Breast epithelium (tissue), 4 donors: ENCODE measurements at regions of chr12 and their contacts with region 1.

Region 1: GRCh38 chr12:83349907-83350611 is 663.4 kb downstream of the TMTC2 start:
- DNase-seq: no peak
- H3K4me3 ChIP-seq: no peak overlapping the region
- H3K27ac ChIP-seq: no peak overlapping the region
- H3K4me1 ChIP-seq: no peaks in the 10 kb centered on the region
- H3K27me3 ChIP-seq: no peaks in the 10 kb centered on the region
- CTCF ChIP-seq: no peak
- POLR2A ChIP-seq: no peak

Region 2: GRCh38 chr12:83361475-83361874 is 11.4 kb after region 1 on chr12:
- intact Hi-C with region 1: loop called (anchors 1 kb)
- DNase-seq: no peak
- H3K4me3 ChIP-seq: no peak overlapping the region
- H3K27ac ChIP-seq: no peak overlapping the region
- H3K4me1 ChIP-seq: no peaks in the 10 kb centered on the region
- H3K27me3 ChIP-seq: no peaks in the 10 kb centered on the region
- CTCF ChIP-seq: no peak
- POLR2A ChIP-seq: no peak

Region 3: GRCh38 chr12:85147331-85147730 is 1797.3 kb after region 1 on chr12:
- intact Hi-C with region 1: loop called (anchors 10 kb)
- DNase-seq: no peak
- H3K4me3 ChIP-seq: no peak overlapping the region
- H3K27ac ChIP-seq: no peak overlapping the region
- H3K4me1 ChIP-seq: no peaks in the 10 kb centered on the region
- H3K27me3 ChIP-seq: no peaks in the 10 kb centered on the region
- CTCF ChIP-seq: no peak
- POLR2A ChIP-seq: no peak